ENCODE measurements at regions of chr4 and their contacts with region 1.

Region 1: GRCh38 chr4:70993181-70994068 is at the start of gene DCK:
- DNase-seq: peak; percentile 83
- H3K4me3 Mint-ChIP-seq: peak within 1 kb of the TSS; percentile 96
- H3K27ac Mint-ChIP-seq: peak within 1 kb of the TSS; percentile 91
- H3K4me1 Mint-ChIP-seq: peaks cover 34% of the 10 kb centered on the region
- H3K27me3 Mint-ChIP-seq: no peaks in the 10 kb centered on the region
- total RNA-seq, gene DCK: 32.1 to 34.1 TPM

Region 2: GRCh38 chr4:70704331-70705145 is 288.9 kb before region 1 on chr4:
- CTCF ChIA-PET with region 1: no interaction called
- intact Hi-C with region 1: loop called (anchors 1 kb)
- DNase-seq: peak; percentile 69
- H3K4me3 Mint-ChIP-seq: peak overlapping the region; percentile 81
- H3K27ac Mint-ChIP-seq: peak overlapping the region; percentile 85
- H3K4me1 Mint-ChIP-seq: peaks cover 27% of the 10 kb centered on the region
- H3K27me3 Mint-ChIP-seq: no peaks in the 10 kb centered on the region

Region 3: DNA sequence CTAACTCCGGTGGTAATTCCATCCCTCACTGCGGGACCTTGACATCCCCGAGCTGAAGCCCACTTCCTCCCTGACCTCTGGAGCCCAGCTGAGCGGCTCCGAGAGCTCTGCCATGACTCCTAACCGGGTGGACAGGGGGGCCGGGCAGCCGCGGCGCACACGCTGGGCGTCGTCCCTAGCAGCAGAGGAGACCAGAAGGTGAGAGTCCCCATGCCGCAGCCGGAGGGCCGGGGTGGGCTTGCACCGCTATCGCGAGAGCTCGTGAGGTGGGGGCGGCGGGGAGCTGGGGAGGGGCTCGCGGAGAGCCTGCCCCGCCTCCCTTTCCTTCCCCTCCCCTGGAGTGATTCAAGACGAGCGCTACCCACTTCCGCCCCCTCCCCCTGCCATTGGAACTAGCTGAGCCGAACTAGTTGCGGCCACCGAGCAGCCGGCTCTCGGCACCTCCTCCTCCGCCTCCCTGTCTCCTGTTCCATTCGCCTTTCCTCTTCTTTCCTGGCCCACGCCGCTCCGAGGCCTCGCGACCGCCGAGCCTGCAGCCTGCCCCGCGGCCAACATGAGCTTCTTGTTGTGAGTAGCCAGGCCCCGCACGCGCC is 91.3 kb before region 1 on chr4 and contains the start of gene MOB1B:
- CTCF ChIA-PET with region 1: no interaction called
- intact Hi-C with region 1: loop called (anchors 1 kb)
- DNase-seq: peak; percentile 92
- H3K4me3 Mint-ChIP-seq: peak within 1 kb of the TSS; percentile 88
- H3K27ac Mint-ChIP-seq: peak within 1 kb of the TSS; percentile 54
- H3K4me1 Mint-ChIP-seq: peaks cover 31% of the 10 kb centered on the region
- H3K27me3 Mint-ChIP-seq: no peaks in the 10 kb centered on the region
- total RNA-seq, gene MOB1B: 14.4 to 16.2 TPM

Region 4: DNA sequence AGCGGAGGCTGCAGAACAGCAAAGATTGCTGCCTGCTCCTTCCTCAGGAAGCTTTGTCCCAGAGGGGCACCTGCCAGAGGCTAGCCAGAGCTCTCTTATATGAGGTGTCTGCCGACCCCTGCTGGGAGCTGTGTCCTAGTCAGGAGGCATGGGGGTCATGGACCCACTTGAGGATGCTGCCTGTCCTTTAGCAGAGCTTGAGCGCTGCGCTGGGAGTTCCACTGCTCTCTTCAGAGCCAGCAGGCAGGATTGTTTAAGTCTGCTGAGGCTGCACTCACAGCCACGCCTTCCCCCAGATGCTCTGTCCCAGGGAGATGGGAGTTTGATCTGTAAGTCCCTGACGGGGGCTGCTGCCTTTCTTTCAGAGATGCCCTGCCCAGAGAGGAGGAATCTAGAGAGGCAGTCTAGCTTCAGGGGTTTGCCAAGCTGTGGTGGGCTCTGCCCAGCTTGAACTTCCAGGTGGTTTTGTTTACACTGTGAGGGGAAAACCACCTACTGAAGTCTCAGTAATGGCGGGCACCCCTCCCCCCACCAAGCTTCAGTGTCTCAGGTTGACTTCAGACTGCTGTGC is 10.9 kb after region 1 on chr4:
- CTCF ChIA-PET with region 1: interaction called, 17 read pairs
- intact Hi-C with region 1: loop called (anchors 1 kb)
- DNase-seq: peak; percentile 82
- H3K4me3 Mint-ChIP-seq: peak overlapping the region; percentile 26
- H3K27ac Mint-ChIP-seq: peak overlapping the region; percentile 1
- H3K4me1 Mint-ChIP-seq: peaks cover 77% of the 10 kb centered on the region
- H3K27me3 Mint-ChIP-seq: no peaks in the 10 kb centered on the region

Region 5: GRCh38 chr4:71184195-71184781 is 190.9 kb after region 1 on chr4:
- CTCF ChIA-PET with region 1: interaction called, 4 read pairs
- intact Hi-C with region 1: loop called (anchors 5 kb)
- DNase-seq: peak; percentile 69
- H3K4me3 Mint-ChIP-seq: no peak overlapping the region
- H3K27ac Mint-ChIP-seq: no peak overlapping the region
- H3K4me1 Mint-ChIP-seq: peaks cover 18% of the 10 kb centered on the region
- H3K27me3 Mint-ChIP-seq: peaks cover 35% of the 10 kb centered on the region

Measured in activated naive CD4-positive, alpha-beta T cell treated with anti-CD3 and anti-CD28 coated beads for 36 hours (primary cell).